Tibial artery (tissue), 4 donors: ENCODE measurements at regions of chr5 and their contacts with region 1.

Region 1: GRCh38 chr5:38858839-38859238 is 13.0 kb downstream of the OSMR start:
- DNase-seq: no peak
- H3K4me3 ChIP-seq: no peak overlapping the region
- H3K27ac ChIP-seq: no peak overlapping the region
- H3K4me1 ChIP-seq: peaks cover 0 to 29% (median 8%) of the 10 kb centered on the region in 4 donors
- H3K27me3 ChIP-seq: no peaks in the 10 kb centered on the region
- CTCF ChIP-seq: no peak

Region 2: GRCh38 chr5:38707352-38708210 is 151.3 kb before region 1 on chr5:
- intact Hi-C with region 1: no loop called
- DNase-seq: no peak
- H3K4me3 ChIP-seq: no peak overlapping the region
- H3K27ac ChIP-seq: no peak overlapping the region
- H3K4me1 ChIP-seq: no peaks in the 10 kb centered on the region
- H3K27me3 ChIP-seq: no peaks in the 10 kb centered on the region
- CTCF ChIP-seq: no peak

Region 3: GRCh38 chr5:38878391-38879077 is 19.7 kb after region 1 on chr5:
- intact Hi-C with region 1: loop called (anchors 1 kb)
- DNase-seq: no peak
- H3K4me3 ChIP-seq: no peak overlapping the region
- H3K27ac ChIP-seq: no peak overlapping the region
- H3K4me1 ChIP-seq: no peaks in the 10 kb centered on the region
- H3K27me3 ChIP-seq: no peaks in the 10 kb centered on the region
- CTCF ChIP-seq: no peak